ENCODE measurements at regions of chr2 and their contacts with region 1.

Region 1: DNA sequence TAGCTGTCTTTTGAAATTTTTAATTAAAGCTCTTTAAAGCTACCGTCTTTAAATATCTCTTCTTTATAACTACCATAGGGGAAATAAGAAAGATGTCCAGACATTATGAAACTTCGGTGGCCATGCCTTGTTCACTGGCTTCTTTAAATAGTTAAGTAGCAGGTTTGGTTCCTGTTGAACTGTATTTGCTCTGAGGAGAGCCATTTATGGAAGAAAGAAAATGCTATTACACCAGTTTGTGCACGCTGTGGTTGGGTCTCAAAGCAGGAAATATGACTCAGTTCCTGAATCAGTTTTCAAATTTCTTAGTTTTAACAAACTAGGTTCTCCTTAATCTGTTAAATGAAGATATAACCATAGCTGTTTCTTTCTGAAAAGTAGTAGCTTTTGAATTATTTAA is 12.2 kb downstream of the ARPC2 start:
- DNase-seq: peak; percentile 88
- H3K4me3 ChIP-seq: peak overlapping the region in 1 of 3 experiments; percentile 39
- H3K27ac ChIP-seq: peak overlapping the region; percentile 70
- H3K4me1 ChIP-seq: peaks cover 31% of the 10 kb centered on the region
- H3K27me3 ChIP-seq: no peaks in the 10 kb centered on the region
- CTCF ChIP-seq: no peak
- POLR2A ChIP-seq: no peak

Region 2: GRCh38 chr2:218202266-218202665 is 27.0 kb before region 1 on chr2:
- CTCF ChIA-PET with region 1: no interaction called
- POLR2A ChIA-PET with region 1: no interaction called
- dilution Hi-C with region 1: no loop called
- intact Hi-C with region 1: no loop called
- DNase-seq: no peak
- H3K4me3 ChIP-seq: no peak overlapping the region
- H3K27ac ChIP-seq: no peak overlapping the region
- H3K4me1 ChIP-seq: no peaks in the 10 kb centered on the region
- H3K27me3 ChIP-seq: peaks cover 3 to 14% of the 10 kb centered on the region in 2 experiments
- CTCF ChIP-seq: no peak
- POLR2A ChIP-seq: no peak

Region 3: DNA sequence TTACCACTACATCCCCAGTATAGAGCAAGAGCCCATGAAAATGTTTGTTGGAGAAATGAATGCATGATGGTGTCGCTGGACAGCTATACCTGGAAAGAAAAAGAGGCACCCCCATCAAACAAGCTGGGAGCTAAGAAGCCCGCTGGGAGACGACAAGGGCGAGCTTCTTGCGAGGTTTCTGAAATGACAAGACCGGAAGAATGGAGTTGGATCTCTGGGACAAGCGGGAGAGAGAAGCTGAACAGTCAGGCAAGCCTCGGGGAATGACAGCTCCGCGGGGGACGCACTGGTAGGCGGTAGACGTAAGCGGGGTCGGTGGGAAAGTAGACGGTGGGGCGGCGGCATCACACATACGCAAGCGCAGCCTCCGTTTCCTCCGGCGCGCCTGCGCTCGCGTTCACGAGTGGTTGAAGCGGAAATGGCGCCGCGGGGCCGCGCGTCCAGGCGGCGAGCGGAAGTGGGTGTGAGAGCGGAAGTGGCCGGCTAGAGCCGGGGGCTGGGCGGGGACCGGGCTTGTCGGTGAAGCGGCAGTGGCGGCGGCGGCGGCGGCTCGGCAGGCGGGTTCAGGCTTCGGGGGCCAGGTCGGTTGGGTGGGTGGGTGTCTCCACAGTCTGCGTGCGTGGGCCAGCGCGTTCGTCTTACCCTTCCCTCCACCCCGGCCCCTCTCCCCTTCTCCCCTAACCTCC is 12.4 kb before region 1 on chr2 and contains the start of gene ARPC2:
- CTCF ChIA-PET with region 1: interaction called, 8 read pairs
- POLR2A ChIA-PET with region 1: interaction called, 3 read pairs
- dilution Hi-C with region 1: no loop called
- intact Hi-C with region 1: loop called (anchors 1 kb)
- DNase-seq: peak; percentile 97
- H3K4me3 ChIP-seq: peak within 1 kb of the TSS; percentile 81 to 96 (median 88)
- H3K27ac ChIP-seq: peak within 1 kb of the TSS; percentile 70
- H3K4me1 ChIP-seq: peaks cover 32% of the 10 kb centered on the region
- H3K27me3 ChIP-seq: peaks cover 0 to under 1% of the 10 kb centered on the region in 2 experiments
- CTCF ChIP-seq: no peak
- POLR2A ChIP-seq: peak; percentile 89
- total RNA-seq, gene ARPC2: 455 and 483 TPM in 2 replicates

Region 4: DNA sequence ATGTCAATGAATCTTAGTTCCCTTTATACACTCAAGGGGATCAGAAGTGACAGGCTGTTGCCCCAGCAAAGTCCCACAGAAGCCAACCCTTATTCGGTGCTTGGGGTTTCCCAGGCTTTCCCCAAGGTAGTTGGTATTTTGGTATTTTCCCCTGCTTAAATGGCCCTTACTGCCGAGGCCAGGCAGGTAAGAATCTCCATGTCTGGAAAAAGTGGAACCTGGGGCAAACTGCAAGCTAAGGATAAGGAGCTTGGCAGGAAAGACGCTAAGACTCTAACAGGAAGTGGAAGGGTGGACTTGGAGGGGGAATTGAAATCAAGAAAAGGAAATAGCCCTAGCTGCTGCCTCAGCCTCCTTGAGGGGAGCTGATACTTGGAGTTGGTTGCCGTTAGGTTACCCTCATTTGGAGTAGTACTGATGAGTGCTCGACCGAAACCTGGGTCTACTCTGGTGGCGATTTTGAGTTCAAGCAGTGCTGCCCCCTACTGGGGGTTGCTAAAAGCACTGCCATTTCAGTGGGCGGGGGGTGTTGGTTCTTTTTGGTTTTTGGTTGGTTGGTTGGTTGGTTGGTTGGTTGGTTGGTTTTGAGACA is 28.2 kb after region 1 on chr2:
- CTCF ChIA-PET with region 1: interaction called, 3 read pairs
- POLR2A ChIA-PET with region 1: no interaction called
- dilution Hi-C with region 1: no loop called
- intact Hi-C with region 1: loop called (anchors 1 kb)
- DNase-seq: peak; percentile 24
- H3K4me3 ChIP-seq: no peak overlapping the region
- H3K27ac ChIP-seq: no peak overlapping the region
- H3K4me1 ChIP-seq: peaks cover 17% of the 10 kb centered on the region
- H3K27me3 ChIP-seq: no peaks in the 10 kb centered on the region
- CTCF ChIP-seq: peak; percentile 60 to 69
- POLR2A ChIP-seq: peak; percentile 24

Region 5: DNA sequence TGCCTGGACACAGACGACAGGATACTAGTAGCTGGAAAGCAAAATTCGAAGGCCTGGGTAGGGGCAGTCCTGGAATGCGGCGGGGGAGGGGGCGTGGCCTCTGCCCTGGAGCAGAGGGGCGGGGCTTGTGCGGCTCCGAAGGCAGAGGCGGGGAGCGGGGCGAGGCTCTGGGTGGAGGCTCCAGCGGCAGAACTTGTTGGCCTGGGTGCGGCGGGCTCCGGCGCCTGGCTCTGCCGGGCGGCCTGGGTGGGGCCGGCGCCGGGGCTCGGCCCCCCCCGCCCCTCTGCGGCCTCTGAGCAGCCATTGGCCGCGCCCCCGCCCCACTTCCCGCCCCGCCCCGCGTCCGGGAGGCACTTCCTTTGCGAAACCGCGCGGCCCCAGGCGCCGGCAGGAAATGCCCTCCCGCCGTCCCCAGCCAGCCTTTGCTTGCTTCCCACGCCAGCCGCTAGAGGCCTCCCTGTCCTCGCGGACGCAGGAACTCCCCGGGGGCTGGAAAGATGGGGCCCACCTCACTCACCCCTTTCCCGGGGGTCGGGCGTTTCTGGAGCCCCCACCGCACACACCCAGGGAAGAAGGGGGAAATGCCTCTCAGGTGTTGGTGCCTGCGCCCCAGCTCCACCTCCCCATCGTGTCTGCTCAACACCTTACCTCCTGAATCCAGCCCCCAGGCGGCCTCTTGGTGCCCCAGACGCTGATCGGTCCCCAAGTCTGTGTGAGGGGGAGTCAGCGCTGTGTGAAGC is 177.1 kb after region 1 on chr2:
- CTCF ChIA-PET with region 1: no interaction called
- POLR2A ChIA-PET with region 1: no interaction called
- dilution Hi-C with region 1: no loop called
- intact Hi-C with region 1: loop called (anchors 5 kb)
- DNase-seq: peak; percentile 94
- H3K4me3 ChIP-seq: peak overlapping the region; percentile 16 to 25 (median 18)
- H3K27ac ChIP-seq: peak overlapping the region; percentile 81
- H3K4me1 ChIP-seq: peaks cover 22% of the 10 kb centered on the region
- H3K27me3 ChIP-seq: no peaks in the 10 kb centered on the region
- CTCF ChIP-seq: peak; percentile 66 to 91
- POLR2A ChIP-seq: peak; percentile 80